Dendritic cell treated with granulocyte-macrophage colony-stimulating factor and Interleukin-4, amounts not matched to agents 40 ng/mL and 50 ng/mL, for 4 days (primary cell): ENCODE measurements at regions of chr3 and their contacts with region 1.

Region 1: DNA sequence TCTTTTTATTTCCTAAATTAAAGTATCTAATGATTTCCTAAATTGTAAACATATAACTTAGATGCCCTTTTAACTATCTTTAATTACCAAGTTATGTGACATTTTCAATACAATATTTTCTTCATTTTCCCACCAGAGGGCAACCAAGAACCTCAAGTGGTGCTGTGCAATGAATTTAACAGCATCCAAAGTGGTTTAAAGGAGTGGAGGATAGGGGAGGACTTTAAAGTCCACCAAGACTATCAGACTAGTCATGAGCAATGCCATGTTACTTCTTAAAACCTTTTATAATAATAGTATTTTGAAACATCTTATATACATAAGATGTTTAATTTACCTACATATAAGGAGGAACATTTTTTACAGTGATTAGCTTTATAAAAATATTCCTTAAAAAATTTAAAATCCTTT is 74.4 kb downstream of the DLG1 start:
- H3K4me3 Mint-ChIP-seq: no peak overlapping the region
- H3K27ac Mint-ChIP-seq: no peak overlapping the region
- H3K4me1 Mint-ChIP-seq: peaks cover 5% of the 10 kb centered on the region
- H3K27me3 Mint-ChIP-seq: no peaks in the 10 kb centered on the region

Region 2: GRCh38 chr3:196914866-196915265 is 309.2 kb before region 1 on chr3:
- intact Hi-C with region 1: no loop called
- H3K4me3 Mint-ChIP-seq: no peak overlapping the region
- H3K27ac Mint-ChIP-seq: no peak overlapping the region
- H3K4me1 Mint-ChIP-seq: peaks cover 40% of the 10 kb centered on the region
- H3K27me3 Mint-ChIP-seq: no peaks in the 10 kb centered on the region

Region 3: DNA sequence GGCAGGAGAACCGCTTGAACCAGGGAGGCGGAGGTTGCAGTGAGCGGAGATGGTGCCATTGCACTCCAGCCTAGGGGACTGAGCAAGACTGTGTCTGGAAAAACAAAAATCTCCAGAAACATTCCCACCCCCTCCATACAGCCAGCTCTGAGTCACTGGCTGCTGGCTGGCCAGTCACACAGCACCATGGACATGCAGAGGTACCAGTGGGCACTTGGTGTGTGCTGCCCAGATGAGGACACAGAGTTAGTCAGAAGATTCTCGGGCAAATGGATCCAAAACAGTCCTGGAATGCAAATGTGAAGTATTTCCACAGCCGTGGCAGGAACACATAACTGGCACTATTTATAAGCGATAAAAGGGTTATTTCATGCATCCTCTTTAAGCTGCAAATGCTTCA is 287.1 kb after region 1 on chr3:
- intact Hi-C with region 1: loop called (anchors 1 kb)
- H3K4me3 Mint-ChIP-seq: no peak overlapping the region
- H3K27ac Mint-ChIP-seq: no peak overlapping the region
- H3K4me1 Mint-ChIP-seq: peaks cover 8% of the 10 kb centered on the region
- H3K27me3 Mint-ChIP-seq: peaks cover 7% of the 10 kb centered on the region

Region 4: GRCh38 chr3:197590313-197590962 is 366.4 kb after region 1 on chr3:
- intact Hi-C with region 1: no loop called
- H3K4me3 Mint-ChIP-seq: no peak overlapping the region
- H3K27ac Mint-ChIP-seq: no peak overlapping the region
- H3K4me1 Mint-ChIP-seq: peaks cover 23% of the 10 kb centered on the region
- H3K27me3 Mint-ChIP-seq: peaks cover 4% of the 10 kb centered on the region